Endothelial cell of umbilical vein (primary cell): ENCODE measurements at regions of chr6 and their contacts with region 1.

Region 1: DNA sequence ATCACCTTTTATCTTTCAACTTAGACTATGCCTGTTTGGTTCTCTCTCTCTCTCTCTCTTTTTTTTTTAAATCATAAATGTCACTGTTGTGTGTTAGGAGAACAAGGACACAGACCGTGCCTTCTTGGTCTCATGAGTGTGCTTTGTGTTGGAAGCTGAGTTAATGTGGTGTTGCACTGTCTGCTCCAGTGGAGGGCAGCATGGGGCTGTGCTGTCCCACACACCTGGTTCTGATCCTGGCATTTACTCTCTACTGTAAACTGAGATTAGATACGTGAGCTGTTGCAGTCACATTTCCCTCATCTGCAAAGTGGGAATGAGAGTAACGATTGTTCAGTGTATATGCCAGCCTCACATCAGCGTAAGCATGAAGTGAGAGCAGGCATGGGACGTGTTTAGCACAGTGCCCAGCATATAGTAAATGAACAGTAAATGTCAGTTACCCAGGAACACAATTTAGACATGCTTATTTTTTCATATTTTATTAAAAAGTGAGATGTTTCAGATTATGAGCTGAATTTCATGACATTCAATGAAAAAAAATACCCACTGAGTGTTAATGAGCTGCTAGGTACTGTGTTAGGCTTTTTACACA is 161.1 kb downstream of the FARS2 start:
- DNase-seq: peak; percentile 40
- H3K4me3 ChIP-seq: no peak overlapping the region
- H3K27ac ChIP-seq: no peak overlapping the region
- H3K4me1 ChIP-seq: no peaks in the 10 kb centered on the region
- H3K27me3 ChIP-seq: no peaks in the 10 kb centered on the region
- CTCF ChIP-seq: peak; percentile 40 to 55
- POLR2A ChIP-seq: no peak

Region 2: GRCh38 chr6:5764401-5764955 is 342.1 kb after region 1 on chr6:
- CTCF ChIA-PET with region 1: no interaction called
- POLR2A ChIA-PET with region 1: no interaction called
- dilution Hi-C with region 1: no loop called
- intact Hi-C with region 1: loop called (anchors 1 kb)
- DNase-seq: no peak
- H3K4me3 ChIP-seq: no peak overlapping the region
- H3K27ac ChIP-seq: no peak overlapping the region
- H3K4me1 ChIP-seq: no peaks in the 10 kb centered on the region
- H3K27me3 ChIP-seq: no peaks in the 10 kb centered on the region
- CTCF ChIP-seq: no peak
- POLR2A ChIP-seq: no peak